ENCODE measurements at regions of chr17 and their contacts with region 1.

Region 1: DNA sequence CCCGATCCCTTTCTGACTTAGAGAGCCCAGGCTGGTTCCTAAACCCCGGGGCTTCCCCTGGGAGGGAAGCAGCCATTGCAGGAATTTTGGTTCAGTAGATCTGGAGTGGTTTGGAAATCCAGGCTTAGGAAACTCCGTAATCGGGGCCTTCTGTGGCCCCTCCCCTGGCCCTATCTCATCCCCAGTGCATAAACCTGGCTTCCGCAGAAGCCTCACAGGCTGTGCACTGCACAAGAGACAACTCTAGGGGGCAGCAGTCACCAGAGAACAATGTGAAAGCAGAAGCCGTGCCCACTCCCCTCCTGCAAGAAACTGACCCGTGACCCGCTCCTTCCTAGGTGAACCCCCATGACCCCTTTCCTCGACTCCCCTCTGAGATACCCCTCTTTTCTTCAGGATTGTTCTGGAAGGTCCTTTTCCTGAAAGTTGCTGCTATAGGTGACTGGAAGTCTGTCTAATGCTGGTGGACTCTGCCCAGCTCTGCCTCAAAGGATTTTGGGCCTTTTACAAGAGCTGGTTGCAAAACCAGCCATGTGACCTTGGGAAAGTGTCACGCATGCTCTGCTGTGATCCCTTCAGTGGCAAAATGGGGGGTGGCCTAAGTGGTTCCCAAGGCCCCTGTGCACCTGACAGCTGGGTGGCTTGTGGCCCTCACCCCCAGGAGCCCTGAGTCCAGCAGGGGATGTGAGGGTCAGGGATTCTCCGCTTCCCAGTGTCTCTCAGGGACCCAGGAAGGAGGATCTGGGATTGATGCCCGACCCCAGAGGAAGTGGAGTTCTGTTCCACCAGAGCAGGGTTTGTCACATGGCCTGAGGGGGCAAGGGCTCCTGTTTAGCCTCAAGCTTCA is 14.4 kb downstream of the GUCY2D start:
- DNase-seq: peak in 8 of 9 donors; percentile 19 to 56 (median 43)
- ATAC-seq: peak; percentile 88
- H3K4me3 ChIP-seq: peak overlapping the region; percentile 59
- H3K4me3 Mint-ChIP-seq: peak overlapping the region; percentile 74 to 88 (median 82)
- H3K27ac ChIP-seq: no peak overlapping the region
- H3K27ac Mint-ChIP-seq: peak overlapping the region in 2 of 9 donors; percentile 28 to 41
- H3K4me1 ChIP-seq: peaks cover 0 to 3% of the 10 kb centered on the region in 2 donors
- H3K4me1 Mint-ChIP-seq: peaks cover 0 to 21% (median 7%) of the 10 kb centered on the region in 7 donors
- H3K27me3 ChIP-seq: no peaks in the 10 kb centered on the region
- H3K27me3 Mint-ChIP-seq: peaks cover 0 to 38% (median 4%) of the 10 kb centered on the region in 5 donors

Region 2: GRCh38 chr17:8041249-8041928 is 24.5 kb after region 1 on chr17:
- CTCF ChIA-PET with region 1: interaction called, 3 read pairs
- POLR2A ChIA-PET with region 1: no interaction called
- intact Hi-C with region 1: loop called in 1 of 2 experiments (anchors 1 kb)
- DNase-seq: peak in 7 of 9 donors; percentile 18 to 56 (median 47)
- ATAC-seq: peak; percentile 69
- H3K4me3 ChIP-seq: no peak overlapping the region
- H3K4me3 Mint-ChIP-seq: no peak overlapping the region
- H3K27ac ChIP-seq: no peak overlapping the region
- H3K27ac Mint-ChIP-seq: no peak overlapping the region
- H3K4me1 ChIP-seq: no peaks in the 10 kb centered on the region
- H3K4me1 Mint-ChIP-seq: peaks cover 0 to 16% (median 0%) of the 10 kb centered on the region in 7 donors
- H3K27me3 ChIP-seq: peaks cover 0 to 13% of the 10 kb centered on the region in 2 donors
- H3K27me3 Mint-ChIP-seq: peaks cover 18 to 30% (median 23%) of the 10 kb centered on the region in 5 donors